Right ventricle myocardium inferior (tissue), 1 donor: ENCODE measurements at regions of chr1 and their contacts with region 1.

Region 1: GRCh38 chr1:58515794-58516401 is 30.6 kb downstream of the OMA1 start:
- DNase-seq: no peak
- ATAC-seq: peak; percentile 57

Region 2: DNA sequence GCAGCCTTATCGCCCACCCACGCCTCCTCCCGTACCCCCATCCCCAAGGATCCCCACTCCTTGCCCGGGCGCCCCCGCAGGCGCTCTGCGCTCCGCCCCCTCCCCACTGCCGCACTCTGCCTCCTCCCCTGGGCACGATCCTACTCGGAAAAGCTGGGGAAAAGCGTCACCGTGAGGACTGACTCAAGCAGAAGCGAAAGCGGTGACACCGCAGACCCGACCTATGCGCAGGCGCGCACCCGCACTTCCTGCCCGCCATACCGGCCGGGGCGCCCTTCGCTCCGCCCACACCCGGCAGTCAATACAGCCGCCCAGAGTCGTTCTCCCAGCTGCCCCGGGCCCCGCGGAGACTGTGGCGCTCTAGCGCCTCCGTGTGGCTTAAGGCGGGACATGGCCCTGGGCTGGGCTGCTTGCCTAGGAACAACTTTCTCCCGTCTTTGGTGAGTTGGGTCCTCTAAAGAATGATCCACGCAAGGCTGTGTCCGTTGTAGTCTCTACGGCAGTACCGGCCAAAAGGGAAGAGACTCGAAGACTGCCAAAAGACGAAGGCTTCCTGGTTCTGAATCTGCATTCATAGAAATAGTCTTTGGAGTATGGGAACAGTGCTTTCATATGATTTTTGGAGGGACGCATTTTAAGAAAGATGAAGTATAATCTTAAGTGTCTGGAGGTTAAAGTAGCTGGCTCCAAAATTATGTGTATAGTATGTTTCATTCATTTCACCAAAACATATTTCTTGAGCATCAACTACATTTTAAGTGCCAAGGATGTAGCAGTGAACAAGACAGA is 30.8 kb after region 1 on chr1 and contains the start of gene OMA1:
- intact Hi-C with region 1: loop called (anchors 1 kb)
- DNase-seq: peak; percentile 99
- ATAC-seq: peak; percentile 99
- total RNA-seq, gene OMA1: 27.8 TPM

Region 3: GRCh38 chr1:58652651-58653184 is 136.8 kb after region 1 on chr1:
- intact Hi-C with region 1: loop called (anchors 1 kb)
- DNase-seq: no peak
- ATAC-seq: peak; percentile 83

Region 4: GRCh38 chr1:59947047-59947938 is 1431.4 kb after region 1 on chr1:
- intact Hi-C with region 1: loop called (anchors 5 kb)
- DNase-seq: no peak
- ATAC-seq: peak; percentile 85